ENCODE measurements at regions of chr1 and their contacts with region 1.

Region 1: DNA sequence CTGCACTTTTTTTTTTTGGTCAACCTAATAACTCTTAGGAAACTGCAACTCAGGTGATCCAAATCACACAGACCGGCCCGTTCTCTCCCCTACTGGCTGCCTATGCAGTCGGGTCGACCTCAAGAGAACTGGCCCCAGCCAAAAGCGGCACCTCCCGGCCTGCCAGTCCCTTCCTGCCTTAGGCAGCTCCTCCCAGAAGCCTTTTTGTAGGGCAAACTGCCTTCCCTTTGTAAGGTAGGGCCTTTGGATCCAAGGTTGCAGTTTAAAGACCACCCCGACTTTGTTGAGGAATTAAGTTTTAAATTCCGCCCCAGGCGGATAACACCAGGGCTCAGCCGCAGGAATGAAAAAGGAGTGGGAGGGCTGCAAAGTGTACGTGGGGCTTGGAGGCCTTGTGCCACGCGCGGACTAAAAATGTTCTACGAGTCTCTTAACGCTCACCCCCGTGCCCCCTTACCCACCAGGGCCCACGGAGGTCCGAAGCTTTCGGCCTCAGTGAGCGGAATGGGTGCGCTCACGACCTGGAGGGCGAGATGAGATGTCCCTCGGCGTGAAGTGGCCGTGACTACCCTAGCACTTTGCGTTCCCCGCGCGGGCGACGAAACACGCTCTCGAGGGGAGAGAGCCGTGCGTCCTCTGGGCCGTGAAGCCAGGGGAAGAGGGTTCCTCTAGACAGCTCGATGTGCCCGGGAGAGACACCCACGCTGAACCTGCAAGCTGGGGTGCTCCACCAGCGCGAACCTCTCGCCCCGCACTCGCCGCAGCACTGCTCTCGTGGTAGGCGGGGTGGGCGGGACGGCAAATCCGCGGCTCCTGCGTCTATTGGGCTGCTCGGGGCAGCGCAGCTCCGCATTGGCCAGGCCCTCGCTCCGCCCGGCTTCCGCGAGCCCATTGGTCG is 489 bp upstream of the ST3GAL3 start:
- DNase-seq: peak; percentile 97
- ATAC-seq: peak; percentile 97
- H3K4me3 Mint-ChIP-seq: peak overlapping the region; percentile 89
- H3K27ac Mint-ChIP-seq: peak overlapping the region; percentile 83
- H3K4me1 Mint-ChIP-seq: peaks cover 32% of the 10 kb centered on the region
- H3K27me3 Mint-ChIP-seq: no peaks in the 10 kb centered on the region

Region 2: GRCh38 chr1:42846257-42847110 is 860.4 kb before region 1 on chr1 and contains the start of gene ZNF691:
- CTCF ChIA-PET with region 1: no interaction called
- POLR2A ChIA-PET with region 1: no interaction called
- intact Hi-C with region 1: loop called in 1 of 2 experiments (anchors 5 kb)
- DNase-seq: peak; percentile 94
- ATAC-seq: peak; percentile 93
- H3K4me3 Mint-ChIP-seq: peak within 1 kb of the TSS; percentile 97
- H3K27ac Mint-ChIP-seq: peak within 1 kb of the TSS; percentile 89
- H3K4me1 Mint-ChIP-seq: peaks cover 34% of the 10 kb centered on the region
- H3K27me3 Mint-ChIP-seq: no peaks in the 10 kb centered on the region
- total RNA-seq, gene ZNF691: 10.5 to 11.7 TPM

Region 3: GRCh38 chr1:43121256-43121900 is 585.5 kb before region 1 on chr1:
- CTCF ChIA-PET with region 1: no interaction called
- POLR2A ChIA-PET with region 1: no interaction called
- intact Hi-C with region 1: no loop called
- DNase-seq: no peak
- ATAC-seq: no peak
- H3K4me3 Mint-ChIP-seq: no peak overlapping the region
- H3K27ac Mint-ChIP-seq: no peak overlapping the region
- H3K4me1 Mint-ChIP-seq: no peaks in the 10 kb centered on the region
- H3K27me3 Mint-ChIP-seq: peaks cover 15% of the 10 kb centered on the region

Region 4: DNA sequence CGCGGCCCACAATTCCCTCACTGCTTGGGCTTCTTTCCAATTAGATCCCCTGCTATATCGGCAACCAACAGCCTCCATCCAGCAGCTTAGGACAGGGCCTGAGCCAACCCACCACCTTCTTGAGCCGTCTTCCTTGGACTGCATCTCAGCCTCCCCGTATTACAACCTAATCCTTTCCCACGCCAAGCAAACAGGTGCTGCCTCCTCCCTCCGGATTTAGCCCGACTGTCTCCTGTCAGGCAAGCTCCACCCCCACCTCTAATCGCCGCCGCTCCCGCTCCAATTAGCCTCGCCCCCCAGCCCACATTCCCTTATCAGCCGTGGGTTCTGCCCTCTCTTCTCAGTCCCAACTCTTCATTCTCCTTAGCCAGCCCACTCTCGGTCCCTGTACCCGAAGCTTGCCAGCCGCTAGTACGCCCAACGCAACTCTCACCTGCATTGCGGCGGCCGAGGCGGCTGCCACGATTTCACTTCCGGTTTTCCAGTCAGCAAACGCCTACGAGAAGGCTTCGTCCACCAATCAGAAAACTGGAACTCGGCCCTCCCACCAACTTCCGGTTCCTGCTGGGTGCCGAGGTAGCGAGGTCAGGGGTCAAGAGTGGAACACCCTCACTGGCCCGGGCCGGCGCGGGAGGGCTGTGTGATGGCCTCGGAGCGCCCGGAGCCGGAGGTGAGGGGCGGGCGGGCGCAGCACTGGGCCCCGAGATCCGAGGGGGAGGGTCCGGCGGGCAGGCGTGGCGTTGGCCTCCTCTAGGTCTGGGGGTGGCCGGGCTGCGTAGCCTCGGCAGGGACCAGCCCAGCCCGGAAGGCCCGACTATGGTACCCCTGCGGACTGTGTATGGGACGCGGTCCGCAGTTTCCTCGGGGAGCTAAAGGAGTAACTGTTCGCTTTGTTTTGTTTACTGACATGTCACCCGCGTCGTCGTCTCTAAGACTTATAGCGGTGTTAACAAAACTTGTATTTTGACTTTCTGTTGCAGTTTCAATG is 317.2 kb before region 1 on chr1 and contains the starts of genes MED8 and SZT2:
- CTCF ChIA-PET with region 1: no interaction called
- POLR2A ChIA-PET with region 1: no interaction called
- intact Hi-C with region 1: loop called in 1 of 2 experiments (anchors 5 kb)
- DNase-seq: peak; percentile 94
- ATAC-seq: peak; percentile 93
- H3K4me3 Mint-ChIP-seq: peak within 1 kb of the TSS; percentile 99
- H3K27ac Mint-ChIP-seq: peak within 1 kb of the TSS; percentile 97
- H3K4me1 Mint-ChIP-seq: peaks cover 39% of the 10 kb centered on the region
- H3K27me3 Mint-ChIP-seq: no peaks in the 10 kb centered on the region
- total RNA-seq, gene MED8: 32.3 to 36.6 TPM
- total RNA-seq, gene SZT2: 33.6 to 36.3 TPM

Region 5: DNA sequence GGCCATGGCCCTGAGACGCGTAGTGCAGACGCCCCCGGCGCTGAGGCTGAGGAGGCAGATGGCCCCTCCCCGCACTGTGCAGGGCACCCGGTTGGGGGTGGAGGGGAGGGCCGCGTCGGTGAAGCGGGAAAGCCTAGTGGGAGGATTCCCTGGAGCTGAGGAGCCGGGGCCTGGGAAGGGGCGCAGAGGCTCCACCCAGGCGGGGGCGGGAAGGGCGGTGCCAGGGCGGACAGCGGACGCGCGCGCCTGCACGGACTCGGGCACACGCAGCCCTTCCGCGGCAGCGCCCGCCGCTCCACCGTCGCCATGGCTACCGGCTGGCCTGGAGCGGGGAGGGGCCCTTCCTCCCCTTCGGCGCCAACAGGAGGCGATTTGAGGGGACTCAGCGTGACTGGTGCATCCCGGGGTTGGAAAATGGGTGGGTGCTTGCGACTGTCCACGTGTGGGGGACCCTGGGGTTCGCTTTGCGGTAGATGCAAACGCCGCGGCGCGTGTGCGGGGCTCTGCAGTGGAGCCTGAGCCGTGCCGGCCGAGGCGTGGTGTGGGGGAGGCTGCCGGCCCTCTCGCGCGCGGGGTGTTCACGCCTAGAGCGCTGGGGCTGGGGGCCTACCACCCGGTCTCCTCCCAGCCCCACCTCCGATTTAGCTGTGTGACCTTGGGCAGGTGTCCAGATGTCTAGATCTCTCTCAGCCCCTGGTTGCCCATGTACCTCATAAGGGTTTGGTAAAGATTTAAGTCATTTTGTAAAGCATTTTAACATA is 141.1 kb before region 1 on chr1:
- CTCF ChIA-PET with region 1: no interaction called
- POLR2A ChIA-PET with region 1: no interaction called
- intact Hi-C with region 1: loop called in 1 of 2 experiments (anchors 1 kb)
- DNase-seq: peak; percentile 81
- ATAC-seq: peak; percentile 87
- H3K4me3 Mint-ChIP-seq: peak overlapping the region; percentile 62
- H3K27ac Mint-ChIP-seq: no peak overlapping the region
- H3K4me1 Mint-ChIP-seq: no peaks in the 10 kb centered on the region
- H3K27me3 Mint-ChIP-seq: peaks cover 11% of the 10 kb centered on the region

Region 6: DNA sequence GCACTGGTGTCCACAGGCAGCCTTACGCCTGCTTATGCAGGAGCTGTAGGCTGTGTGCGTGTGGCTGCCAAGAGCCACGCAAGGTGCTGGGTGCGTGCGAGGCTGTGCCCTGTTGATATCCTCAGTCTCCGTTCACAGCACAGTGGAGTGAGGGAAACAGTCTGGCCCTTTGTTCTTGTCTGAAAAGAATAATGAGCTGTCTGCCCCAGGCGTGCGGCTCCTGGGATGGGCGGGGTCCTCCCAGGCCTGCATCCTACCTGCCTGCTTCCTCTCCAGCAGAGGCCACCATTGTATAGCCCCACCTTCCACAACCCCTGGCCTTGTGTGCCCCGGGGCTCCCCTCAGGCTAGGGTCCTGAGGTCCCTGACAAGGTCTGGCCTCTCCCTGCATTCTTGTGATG is 103.9 kb before region 1 on chr1:
- CTCF ChIA-PET with region 1: no interaction called
- POLR2A ChIA-PET with region 1: no interaction called
- intact Hi-C with region 1: no loop called
- DNase-seq: no peak
- ATAC-seq: no peak
- H3K4me3 Mint-ChIP-seq: no peak overlapping the region
- H3K27ac Mint-ChIP-seq: no peak overlapping the region
- H3K4me1 Mint-ChIP-seq: no peaks in the 10 kb centered on the region
- H3K27me3 Mint-ChIP-seq: no peaks in the 10 kb centered on the region

Region 7: DNA sequence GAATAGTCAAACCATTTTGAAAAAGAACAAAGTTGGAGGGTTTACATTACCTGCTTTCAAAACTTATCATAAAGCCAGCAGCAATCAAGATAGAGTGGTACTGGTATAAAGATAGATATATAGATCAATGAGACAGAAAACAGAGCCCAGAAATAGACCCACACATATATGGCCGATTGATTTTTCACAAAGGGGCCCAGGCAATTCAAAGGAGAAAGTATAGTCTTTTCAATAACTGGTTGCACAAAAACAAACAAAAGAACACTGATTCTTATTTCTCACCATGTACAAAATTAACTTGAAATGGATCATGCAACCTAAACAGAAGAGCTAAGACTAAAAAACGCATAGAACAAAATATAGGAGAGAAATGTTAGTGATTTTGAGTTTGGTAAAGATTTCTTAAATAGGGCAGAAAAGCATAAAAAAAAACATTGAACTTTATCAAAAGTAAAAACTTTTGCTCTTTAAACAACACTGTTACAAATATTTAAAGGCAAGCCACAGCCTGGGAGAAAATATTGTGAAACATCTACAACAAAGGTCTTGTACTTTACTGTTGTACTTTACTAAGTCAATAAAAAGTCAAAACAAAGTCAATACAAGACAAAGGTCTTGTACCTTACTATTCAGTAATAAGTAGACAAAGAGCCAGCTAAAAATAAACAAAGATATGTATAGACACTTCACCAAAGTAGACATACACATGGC is 50.7 kb after region 1 on chr1:
- CTCF ChIA-PET with region 1: no interaction called
- POLR2A ChIA-PET with region 1: no interaction called
- intact Hi-C with region 1: no loop called
- DNase-seq: no peak
- ATAC-seq: no peak
- H3K4me3 Mint-ChIP-seq: no peak overlapping the region
- H3K27ac Mint-ChIP-seq: no peak overlapping the region
- H3K4me1 Mint-ChIP-seq: peaks cover 3% of the 10 kb centered on the region
- H3K27me3 Mint-ChIP-seq: no peaks in the 10 kb centered on the region

Region 8: DNA sequence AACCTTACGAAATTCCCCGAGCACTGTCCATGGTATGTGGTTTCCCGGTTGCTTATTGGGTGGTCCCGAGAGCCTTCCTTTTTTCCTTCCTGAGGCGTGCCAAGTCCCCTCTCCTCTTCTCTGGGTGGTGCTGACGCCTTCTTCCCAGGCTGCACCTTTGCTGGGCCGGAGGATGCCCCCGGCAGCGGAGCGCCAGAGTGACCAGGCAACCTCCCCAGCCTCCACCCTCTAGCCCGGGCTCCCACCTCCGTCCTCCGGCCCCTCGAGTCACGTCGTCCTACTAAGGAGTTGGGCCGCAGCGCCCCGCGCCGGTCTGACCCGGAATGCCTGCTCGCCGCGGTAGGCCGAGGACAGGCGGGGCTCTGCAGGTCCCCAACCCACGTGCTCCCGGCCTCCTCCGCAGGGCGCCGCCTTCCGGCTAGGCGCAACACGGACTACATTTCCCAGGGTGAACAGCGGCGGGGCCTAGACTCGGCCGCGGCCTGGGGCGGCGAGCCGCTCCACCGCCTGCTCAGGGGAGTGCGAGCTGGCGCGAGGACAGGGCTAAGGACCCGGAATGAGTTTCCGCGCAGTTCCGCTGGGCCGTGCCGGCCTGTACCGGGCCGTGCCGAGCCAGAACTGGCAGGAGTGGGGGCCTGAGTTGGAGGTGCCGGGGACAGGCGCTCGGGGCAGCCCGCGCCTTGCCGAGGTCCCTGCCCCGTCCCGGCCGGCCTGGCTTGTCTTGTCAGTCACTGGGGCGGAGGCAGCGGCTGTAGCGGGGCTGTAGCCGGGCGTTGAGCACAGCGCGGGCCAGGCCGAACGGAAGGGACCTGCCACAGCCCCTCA is 239.6 kb after region 1 on chr1 and contains the start of gene IPO13:
- CTCF ChIA-PET with region 1: interaction called, 6 read pairs
- POLR2A ChIA-PET with region 1: interaction called, 3 read pairs
- intact Hi-C with region 1: loop called (anchors 1 to 5 kb)
- DNase-seq: peak; percentile 98
- ATAC-seq: peak; percentile 96
- H3K4me3 Mint-ChIP-seq: peak within 1 kb of the TSS; percentile 94
- H3K27ac Mint-ChIP-seq: peak within 1 kb of the TSS; percentile 96
- H3K4me1 Mint-ChIP-seq: peaks cover 37% of the 10 kb centered on the region
- H3K27me3 Mint-ChIP-seq: no peaks in the 10 kb centered on the region
- total RNA-seq, gene IPO13: 10.7 to 12.5 TPM

Region 9: GRCh38 chr1:43991476-43992231 is 284.8 kb after region 1 on chr1 and contains the start of gene CCDC24:
- CTCF ChIA-PET with region 1: no interaction called
- POLR2A ChIA-PET with region 1: no interaction called
- intact Hi-C with region 1: loop called in 1 of 2 experiments (anchors 5 kb)
- DNase-seq: peak; percentile 82
- ATAC-seq: peak; percentile 82
- H3K4me3 Mint-ChIP-seq: peak within 1 kb of the TSS; percentile 79
- H3K27ac Mint-ChIP-seq: peak within 1 kb of the TSS; percentile 65
- H3K4me1 Mint-ChIP-seq: peaks cover 8% of the 10 kb centered on the region
- H3K27me3 Mint-ChIP-seq: no peaks in the 10 kb centered on the region
- total RNA-seq, gene CCDC24: 1.2 to 2.0 TPM

Region 10: DNA sequence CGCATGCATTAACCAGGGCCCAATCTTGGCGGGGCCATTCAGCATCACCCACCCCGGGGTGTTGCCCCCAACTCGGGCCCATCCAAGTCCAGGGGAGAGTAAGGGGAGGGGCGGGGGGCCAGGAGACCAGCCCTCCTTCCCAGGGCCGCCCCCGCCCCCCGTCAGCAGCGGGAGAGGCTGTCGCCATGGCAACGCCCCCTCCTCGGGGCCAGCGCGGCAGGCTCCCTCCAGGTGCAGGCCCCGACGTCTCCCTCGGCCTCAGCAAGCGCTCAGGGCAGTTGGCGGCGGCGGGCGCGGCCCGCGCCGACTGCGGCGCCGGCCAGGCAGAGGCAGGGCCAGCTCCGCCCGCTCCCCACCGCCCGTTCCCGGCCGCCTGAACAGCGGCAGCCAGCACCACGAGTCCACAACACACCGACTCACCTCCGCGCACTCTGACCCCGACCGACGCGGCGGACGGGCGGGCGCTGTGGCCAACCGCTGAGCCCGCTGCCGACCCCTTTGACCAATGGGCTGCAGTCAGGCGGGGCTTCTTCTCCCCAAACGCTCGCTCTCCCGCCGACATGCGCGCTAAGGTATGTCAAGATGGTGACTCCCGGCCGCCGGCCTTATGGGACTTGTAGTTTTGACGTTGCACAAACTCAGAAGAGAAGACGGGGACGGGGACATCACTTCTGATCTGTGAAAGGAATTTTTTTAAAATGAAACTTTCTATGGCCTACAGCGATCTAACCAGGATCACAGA is 648.2 kb after region 1 on chr1 and contains the start of gene ERI3:
- CTCF ChIA-PET with region 1: no interaction called
- POLR2A ChIA-PET with region 1: no interaction called
- intact Hi-C with region 1: loop called in 1 of 2 experiments (anchors 1 kb)
- DNase-seq: peak; percentile 98
- ATAC-seq: peak; percentile 100
- H3K4me3 Mint-ChIP-seq: peak within 1 kb of the TSS; percentile 90
- H3K27ac Mint-ChIP-seq: peak within 1 kb of the TSS; percentile 82
- H3K4me1 Mint-ChIP-seq: peaks cover 34% of the 10 kb centered on the region
- H3K27me3 Mint-ChIP-seq: no peaks in the 10 kb centered on the region
- total RNA-seq, gene ERI3: 36.7 to 41.3 TPM